Heart right ventricle (tissue), 16 donors: ENCODE measurements at regions of chrX and their contacts with region 1.

Region 1: GRCh38 chrX:20670611-20671010 is 403.9 kb upstream of the RPS6KA3 start:
- DNase-seq: no peak
- ATAC-seq: no peak
- H3K4me3 ChIP-seq: no peak overlapping the region
- H3K27ac ChIP-seq: no peak overlapping the region
- H3K4me1 ChIP-seq: no peaks in the 10 kb centered on the region
- H3K27me3 ChIP-seq: peaks cover 0 to 17% (median 0%) of the 10 kb centered on the region in 7 donors
- CTCF ChIP-seq: no peak

Region 2: GRCh38 chrX:20452487-20452886 is 218.1 kb before region 1 on chrX:
- intact Hi-C with region 1: no loop called
- DNase-seq: no peak
- ATAC-seq: no peak
- H3K4me3 ChIP-seq: no peak overlapping the region
- H3K27ac ChIP-seq: peak overlapping the region in 1 of 10 donors; percentile 16
- H3K4me1 ChIP-seq: no peaks in the 10 kb centered on the region
- H3K27me3 ChIP-seq: peaks cover 0 to 6% (median 0%) of the 10 kb centered on the region in 7 donors
- CTCF ChIP-seq: no peak

Region 3: DNA sequence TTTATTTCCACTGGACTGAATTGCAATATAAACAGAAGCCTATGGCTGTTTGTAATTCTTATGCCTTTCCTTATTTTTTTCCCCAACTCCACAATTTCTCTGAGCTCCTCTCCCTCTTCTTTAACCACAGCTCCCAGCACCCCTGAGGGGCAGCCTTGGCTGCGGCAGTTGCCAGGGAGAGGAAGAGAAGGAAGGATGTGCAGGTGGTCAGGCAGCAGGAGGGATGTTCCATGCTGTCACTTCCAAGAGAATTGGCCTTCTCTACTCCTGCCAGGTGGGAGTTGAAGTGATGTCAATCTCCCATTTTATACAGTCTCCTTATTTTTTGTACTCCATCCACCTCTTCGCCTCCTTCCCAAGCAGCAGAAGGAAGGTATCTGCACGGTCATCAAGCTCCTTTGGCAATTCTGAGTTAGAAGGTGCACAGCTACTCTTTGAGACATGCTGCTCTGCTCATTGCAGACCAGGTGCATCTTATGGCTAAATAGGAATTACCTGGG is 60.6 kb before region 1 on chrX:
- intact Hi-C with region 1: no loop called
- DNase-seq: no peak
- ATAC-seq: no peak
- H3K4me3 ChIP-seq: no peak overlapping the region
- H3K27ac ChIP-seq: no peak overlapping the region
- H3K4me1 ChIP-seq: no peaks in the 10 kb centered on the region
- H3K27me3 ChIP-seq: peaks cover 0 to 20% (median 0%) of the 10 kb centered on the region in 7 donors
- CTCF ChIP-seq: no peak

Region 4: GRCh38 chrX:20711041-20711760 is 40.6 kb after region 1 on chrX:
- intact Hi-C with region 1: no loop called
- DNase-seq: no peak
- ATAC-seq: no peak
- H3K4me3 ChIP-seq: no peak overlapping the region
- H3K27ac ChIP-seq: no peak overlapping the region
- H3K4me1 ChIP-seq: no peaks in the 10 kb centered on the region
- H3K27me3 ChIP-seq: peaks cover 0 to 11% (median 0%) of the 10 kb centered on the region in 7 donors
- CTCF ChIP-seq: no peak

Region 5: GRCh38 chrX:21479695-21480270 is 809.2 kb after region 1 on chrX:
- intact Hi-C with region 1: loop called in 1 of 10 experiments (anchors 10 kb)
- DNase-seq: peak in 1 of 2 donors; percentile 3
- ATAC-seq: peak in 4 of 8 donors; percentile 30 to 69 (median 48)
- H3K4me3 ChIP-seq: no peak overlapping the region
- H3K27ac ChIP-seq: no peak overlapping the region
- H3K4me1 ChIP-seq: no peaks in the 10 kb centered on the region
- H3K27me3 ChIP-seq: no peaks in the 10 kb centered on the region
- CTCF ChIP-seq: peak in 8 of 9 donors; percentile 29 to 67 (median 58)